ENCODE measurements at regions of chr5 and their contacts with region 1.

Region 1: GRCh38 chr5:36662291-36662851 is 56.0 kb downstream of the SLC1A3 start:
- DNase-seq: peak; percentile 26 to 89 (median 50)

Region 2: DNA sequence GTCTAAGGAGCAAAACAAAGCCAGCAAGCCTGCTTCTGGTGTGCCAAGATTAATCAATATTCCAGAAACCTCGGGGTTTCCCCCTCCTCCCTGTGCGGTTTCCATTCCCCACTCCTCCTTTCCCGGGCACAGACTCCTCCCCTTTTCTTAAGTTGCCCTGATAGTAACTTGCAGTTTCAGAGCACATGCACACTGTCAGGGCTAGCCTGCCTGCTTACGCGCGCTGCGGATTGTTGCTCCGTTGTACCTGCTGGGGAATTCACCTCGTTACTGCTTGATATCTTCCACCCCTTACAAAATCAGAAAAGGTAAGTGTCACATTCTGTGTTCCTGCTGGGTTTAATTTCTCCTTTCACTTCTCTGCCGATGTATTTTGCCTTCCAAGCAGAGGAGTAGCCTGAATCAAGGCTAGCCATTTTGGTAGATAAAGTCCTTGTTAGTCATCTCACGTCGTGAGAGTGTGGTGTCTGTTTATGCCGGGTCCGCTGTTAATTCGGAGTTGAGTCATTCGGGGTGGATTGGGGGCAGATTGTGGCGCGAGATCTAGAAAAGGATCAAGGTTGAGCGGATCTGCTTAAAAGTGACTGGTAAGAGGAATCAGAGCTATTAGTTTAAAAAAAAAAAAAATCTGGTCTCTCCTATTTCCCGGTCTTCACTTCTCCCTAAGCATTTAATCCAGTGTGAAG is 55.8 kb before region 1 on chr5 and contains the start of gene SLC1A3:
- intact Hi-C with region 1: loop called (anchors 5 kb)
- DNase-seq: peak; percentile 41 to 93 (median 64)